A673 (cell line): ENCODE measurements at regions of chr17 and their contacts with region 1.

Region 1: DNA sequence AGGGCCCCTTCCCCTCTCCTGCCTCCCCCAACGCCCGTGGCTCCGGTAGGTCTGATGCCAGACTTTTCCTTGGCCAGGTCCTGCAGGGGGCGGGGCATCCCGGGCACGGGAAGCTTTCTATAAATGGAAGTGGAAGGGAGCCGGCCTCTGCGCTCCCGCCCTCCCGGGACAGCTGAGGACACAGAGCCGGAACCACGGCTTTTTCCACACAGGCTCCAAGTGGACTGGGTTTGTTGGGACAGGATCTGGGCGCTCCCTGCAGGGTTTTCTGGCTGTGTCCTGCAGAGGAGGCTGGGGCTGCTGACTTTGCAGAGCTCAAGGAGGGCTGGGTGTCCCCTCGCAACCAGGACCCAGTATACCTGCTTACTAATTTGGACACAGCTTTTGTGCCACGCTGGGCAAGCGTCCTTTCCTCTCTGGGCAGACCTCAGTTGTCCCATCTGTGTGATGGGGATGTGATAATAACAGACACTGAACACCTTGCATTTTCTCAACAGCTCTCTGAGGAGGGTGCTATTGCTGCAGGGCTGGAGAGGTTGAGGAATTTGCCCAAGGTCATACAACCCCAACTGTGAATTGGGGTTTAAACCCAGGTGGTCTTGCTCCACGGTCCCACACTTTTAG is 1.8 kb downstream of the TNS4 start:
- DNase-seq: peak; percentile 11
- H3K4me3 ChIP-seq: no peak overlapping the region
- H3K27ac ChIP-seq: no peak overlapping the region
- H3K4me1 ChIP-seq: no peaks in the 10 kb centered on the region
- H3K27me3 ChIP-seq: no peaks in the 10 kb centered on the region
- CTCF ChIP-seq: no peak

Region 2: DNA sequence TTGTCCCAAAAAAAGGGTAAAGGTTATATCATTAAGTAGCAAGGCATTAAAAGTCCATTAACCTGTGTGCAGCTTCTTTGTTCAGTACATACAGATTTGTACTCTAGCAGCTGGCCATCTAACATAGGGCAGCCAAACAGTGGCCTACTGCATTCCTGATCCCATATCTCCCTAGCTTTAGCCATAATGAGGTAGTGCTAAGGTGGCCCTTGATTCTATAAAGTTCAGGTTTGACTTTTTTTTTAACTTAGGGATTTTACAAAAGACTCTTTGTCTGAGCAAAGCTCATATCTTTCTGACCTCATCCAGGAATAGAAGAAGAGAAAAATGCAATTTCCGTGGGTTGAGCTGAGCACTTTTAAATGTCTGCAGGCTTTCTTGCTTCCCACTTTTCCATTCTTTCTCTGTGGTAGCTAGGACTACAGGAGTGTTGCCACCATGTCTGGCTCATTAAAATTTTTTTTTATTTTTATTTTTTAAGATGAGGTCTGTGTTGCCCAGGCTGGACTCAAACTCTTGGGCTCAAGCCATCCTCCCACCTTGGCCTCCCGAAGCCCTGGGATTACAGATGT is 231.4 kb before region 1 on chr17:
- CTCF ChIA-PET with region 1: no interaction called
- POLR2A ChIA-PET with region 1: no interaction called
- intact Hi-C with region 1: no loop called
- DNase-seq: no peak
- H3K4me3 ChIP-seq: no peak overlapping the region
- H3K27ac ChIP-seq: no peak overlapping the region
- H3K4me1 ChIP-seq: no peaks in the 10 kb centered on the region
- H3K27me3 ChIP-seq: no peaks in the 10 kb centered on the region
- CTCF ChIP-seq: no peak

Region 3: GRCh38 chr17:40451420-40451819 is 48.2 kb before region 1 on chr17:
- CTCF ChIA-PET with region 1: interaction called, 15 read pairs
- POLR2A ChIA-PET with region 1: no interaction called
- intact Hi-C with region 1: no loop called
- DNase-seq: no peak
- H3K4me3 ChIP-seq: no peak overlapping the region
- H3K27ac ChIP-seq: no peak overlapping the region
- H3K4me1 ChIP-seq: no peaks in the 10 kb centered on the region
- H3K27me3 ChIP-seq: no peaks in the 10 kb centered on the region
- CTCF ChIP-seq: no peak

Region 4: GRCh38 chr17:40461732-40462342 is 37.8 kb before region 1 on chr17:
- CTCF ChIA-PET with region 1: no interaction called
- POLR2A ChIA-PET with region 1: no interaction called
- intact Hi-C with region 1: no loop called
- DNase-seq: no peak
- H3K4me3 ChIP-seq: no peak overlapping the region
- H3K27ac ChIP-seq: no peak overlapping the region
- H3K4me1 ChIP-seq: peaks cover 5% of the 10 kb centered on the region
- H3K27me3 ChIP-seq: no peaks in the 10 kb centered on the region
- CTCF ChIP-seq: no peak

Region 5: DNA sequence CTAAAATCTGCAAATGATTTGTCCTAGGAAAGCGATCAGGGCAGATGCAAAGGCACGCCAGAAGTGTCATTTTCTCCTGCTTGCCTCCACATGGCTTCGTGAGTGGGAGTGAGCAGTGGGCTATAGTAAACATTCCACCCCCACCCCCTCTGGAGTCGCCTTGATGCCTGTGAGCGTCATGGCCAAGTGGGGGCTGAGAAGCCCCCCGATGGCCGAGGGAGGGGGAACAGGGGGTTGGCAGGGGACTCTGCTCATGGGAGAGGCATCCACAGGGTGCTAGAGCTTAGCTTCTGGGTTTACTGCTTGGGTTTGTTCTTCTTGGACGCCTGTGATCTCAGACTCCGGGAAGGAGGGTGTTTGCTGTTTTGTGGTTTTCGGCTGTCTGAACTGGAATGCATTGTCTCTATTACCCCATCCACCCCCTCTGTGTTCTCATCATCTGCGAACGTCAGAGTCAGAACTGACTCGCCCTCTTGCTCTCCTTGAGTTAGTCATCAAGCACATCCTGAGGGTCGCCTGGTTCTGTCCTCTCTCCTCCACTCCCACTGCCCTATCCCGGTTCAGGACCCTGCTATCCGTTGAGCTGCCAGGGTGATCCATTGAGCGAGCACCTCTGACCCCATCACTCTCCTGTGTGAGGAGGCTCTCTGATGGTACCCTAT is 13.7 kb before region 1 on chr17:
- CTCF ChIA-PET with region 1: no interaction called
- POLR2A ChIA-PET with region 1: no interaction called
- intact Hi-C with region 1: no loop called
- DNase-seq: peak; percentile 32
- H3K4me3 ChIP-seq: no peak overlapping the region
- H3K27ac ChIP-seq: no peak overlapping the region
- H3K4me1 ChIP-seq: no peaks in the 10 kb centered on the region
- H3K27me3 ChIP-seq: no peaks in the 10 kb centered on the region
- CTCF ChIP-seq: no peak